ENCODE measurements at regions of chr9 and their contacts with region 1.

Region 1: DNA sequence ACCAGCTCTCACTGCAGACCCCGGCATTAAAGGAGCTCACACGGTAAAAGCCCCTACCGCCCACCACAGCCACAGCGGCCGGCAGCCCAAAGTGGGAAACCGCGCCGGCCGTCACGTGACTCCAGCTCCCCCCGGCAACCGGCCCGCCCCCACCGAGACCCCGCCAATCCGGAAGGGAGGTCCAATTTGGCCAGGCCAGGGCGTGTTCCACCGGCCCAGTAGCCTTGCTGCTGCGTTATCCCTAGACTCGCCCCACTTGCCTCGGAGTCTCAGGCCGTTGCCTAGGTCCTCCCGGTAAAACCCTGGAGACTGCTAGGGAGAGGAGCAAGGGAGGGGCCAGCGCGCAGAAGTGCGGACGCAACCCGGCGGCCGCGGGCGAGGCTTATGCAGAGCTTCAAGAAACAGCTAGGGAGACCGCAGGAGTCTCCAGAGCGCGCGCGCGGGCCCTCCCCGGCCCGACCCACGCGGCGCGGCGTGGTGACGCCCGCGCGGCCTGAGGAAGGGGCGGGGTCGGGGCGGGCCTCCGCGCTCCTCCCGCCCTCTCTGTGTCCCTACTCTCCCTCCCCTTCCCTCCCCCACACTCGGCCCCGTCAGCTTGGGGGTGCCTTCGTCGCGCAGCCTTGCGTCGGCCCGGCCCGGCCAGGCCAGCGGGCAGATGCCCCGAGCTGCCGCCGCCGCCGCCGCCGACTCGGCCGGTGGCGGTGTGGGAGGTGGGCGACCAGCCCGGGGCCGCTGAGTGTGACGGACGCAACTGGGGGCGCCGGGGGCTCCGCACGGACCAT is at the start of gene RIC1:
- DNase-seq: peak; percentile 84 to 93 (median 88)
- ATAC-seq: peak; percentile 82 to 86
- H3K4me3 Mint-ChIP-seq: peak within 1 kb of the TSS; percentile 96 to 100 (median 99)
- H3K27ac Mint-ChIP-seq: peak within 1 kb of the TSS; percentile 96 to 100 (median 98)
- H3K4me1 Mint-ChIP-seq: peaks cover 34 to 80% (median 67%) of the 10 kb centered on the region in 4 donors
- H3K27me3 Mint-ChIP-seq: no peaks in the 10 kb centered on the region
- polyA plus RNA-seq, gene RIC1: 5.4 to 8.3 (median 6.2) TPM

Region 2: DNA sequence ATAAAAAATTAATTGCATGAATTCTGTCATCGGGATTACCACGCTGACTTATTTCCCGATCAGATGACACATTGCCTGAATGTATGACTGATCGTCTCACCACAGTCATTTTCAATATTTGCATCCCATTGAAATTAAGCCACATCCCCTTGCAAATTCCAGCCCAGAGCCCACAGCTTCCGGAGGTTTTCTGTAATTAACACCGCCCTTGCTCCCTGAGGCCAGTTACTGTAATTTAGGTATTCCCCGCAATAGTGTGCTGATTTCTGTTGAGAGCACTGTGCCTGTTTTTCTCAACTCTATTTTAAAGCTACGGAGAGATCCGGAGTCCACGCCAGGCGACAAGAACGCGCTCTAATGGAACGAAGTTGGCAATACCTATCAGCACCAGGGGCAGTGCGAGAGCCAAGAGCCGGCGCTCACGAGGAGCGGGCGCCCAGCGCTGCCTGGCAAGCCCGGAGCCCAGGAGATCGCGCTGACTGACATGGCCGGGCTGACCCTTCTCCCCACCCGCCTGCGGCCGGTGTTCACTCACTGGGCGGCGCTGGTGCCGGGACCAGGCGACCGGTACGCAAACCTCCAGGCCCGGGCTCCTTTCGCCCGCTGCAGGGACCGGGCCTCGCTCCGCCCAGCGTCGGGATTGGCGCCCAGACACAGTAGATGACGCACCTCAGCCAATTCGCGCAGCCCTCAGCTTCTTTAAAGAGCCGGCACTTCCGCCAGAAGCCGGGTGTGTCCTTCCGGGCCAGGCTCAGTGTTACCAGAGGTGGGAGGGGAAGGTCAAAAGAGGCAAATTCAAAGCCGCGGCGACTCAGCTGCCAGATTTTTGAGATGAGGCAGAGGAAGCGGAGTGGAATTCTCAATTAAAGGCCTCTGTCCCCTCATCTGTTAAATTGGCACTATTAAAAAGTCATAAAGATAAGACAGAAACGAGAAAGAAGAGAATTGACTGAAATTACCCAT is 191.2 kb before region 1 on chr9 and contains the start of gene PLGRKT:
- POLR2A ChIA-PET with region 1: interaction called, 16 read pairs
- DNase-seq: peak; percentile 74 to 94 (median 88)
- ATAC-seq: peak; percentile 95 to 96
- H3K4me3 Mint-ChIP-seq: peak within 1 kb of the TSS; percentile 83 to 98 (median 95)
- H3K27ac Mint-ChIP-seq: peak within 1 kb of the TSS; percentile 94 to 100 (median 98)
- H3K4me1 Mint-ChIP-seq: peaks cover 17 to 39% (median 35%) of the 10 kb centered on the region in 4 donors
- H3K27me3 Mint-ChIP-seq: no peaks in the 10 kb centered on the region
- polyA plus RNA-seq, gene PLGRKT: 45.2 to 60.3 (median 55.8) TPM

Region 3: GRCh38 chr9:5582835-5583195 is 45.9 kb before region 1 on chr9:
- POLR2A ChIA-PET with region 1: interaction called, 11 read pairs
- DNase-seq: peak in 9 of 10 donors; percentile 2 to 71 (median 41)
- ATAC-seq: peak; percentile 77 to 90
- H3K4me3 Mint-ChIP-seq: peak overlapping the region in 4 of 10 donors; percentile 13 to 46 (median 38)
- H3K27ac Mint-ChIP-seq: peak overlapping the region in 9 of 10 donors; percentile 40 to 89 (median 85)
- H3K4me1 Mint-ChIP-seq: peaks cover 23 to 49% (median 38%) of the 10 kb centered on the region in 4 donors
- H3K27me3 Mint-ChIP-seq: no peaks in the 10 kb centered on the region

Region 4: GRCh38 chr9:5608298-5609225 is 20.2 kb before region 1 on chr9:
- POLR2A ChIA-PET with region 1: interaction called, 10 read pairs
- DNase-seq: peak in 2 of 10 donors; percentile 18 to 20
- ATAC-seq: peak; percentile 67 to 76
- H3K4me3 Mint-ChIP-seq: peak overlapping the region; percentile 66 to 90 (median 84)
- H3K27ac Mint-ChIP-seq: peak overlapping the region; percentile 22 to 95 (median 80)
- H3K4me1 Mint-ChIP-seq: peaks cover 4 to 39% (median 30%) of the 10 kb centered on the region in 4 donors
- H3K27me3 Mint-ChIP-seq: no peaks in the 10 kb centered on the region

Region 5: GRCh38 chr9:5688109-5688508 is 59.4 kb after region 1 on chr9:
- POLR2A ChIA-PET with region 1: no interaction called
- DNase-seq: no peak
- ATAC-seq: no peak
- H3K4me3 Mint-ChIP-seq: peak overlapping the region in 1 of 10 donors; percentile 0
- H3K27ac Mint-ChIP-seq: no peak overlapping the region
- H3K4me1 Mint-ChIP-seq: peaks cover 11 to 26% (median 20%) of the 10 kb centered on the region in 4 donors
- H3K27me3 Mint-ChIP-seq: no peaks in the 10 kb centered on the region

Region 6: DNA sequence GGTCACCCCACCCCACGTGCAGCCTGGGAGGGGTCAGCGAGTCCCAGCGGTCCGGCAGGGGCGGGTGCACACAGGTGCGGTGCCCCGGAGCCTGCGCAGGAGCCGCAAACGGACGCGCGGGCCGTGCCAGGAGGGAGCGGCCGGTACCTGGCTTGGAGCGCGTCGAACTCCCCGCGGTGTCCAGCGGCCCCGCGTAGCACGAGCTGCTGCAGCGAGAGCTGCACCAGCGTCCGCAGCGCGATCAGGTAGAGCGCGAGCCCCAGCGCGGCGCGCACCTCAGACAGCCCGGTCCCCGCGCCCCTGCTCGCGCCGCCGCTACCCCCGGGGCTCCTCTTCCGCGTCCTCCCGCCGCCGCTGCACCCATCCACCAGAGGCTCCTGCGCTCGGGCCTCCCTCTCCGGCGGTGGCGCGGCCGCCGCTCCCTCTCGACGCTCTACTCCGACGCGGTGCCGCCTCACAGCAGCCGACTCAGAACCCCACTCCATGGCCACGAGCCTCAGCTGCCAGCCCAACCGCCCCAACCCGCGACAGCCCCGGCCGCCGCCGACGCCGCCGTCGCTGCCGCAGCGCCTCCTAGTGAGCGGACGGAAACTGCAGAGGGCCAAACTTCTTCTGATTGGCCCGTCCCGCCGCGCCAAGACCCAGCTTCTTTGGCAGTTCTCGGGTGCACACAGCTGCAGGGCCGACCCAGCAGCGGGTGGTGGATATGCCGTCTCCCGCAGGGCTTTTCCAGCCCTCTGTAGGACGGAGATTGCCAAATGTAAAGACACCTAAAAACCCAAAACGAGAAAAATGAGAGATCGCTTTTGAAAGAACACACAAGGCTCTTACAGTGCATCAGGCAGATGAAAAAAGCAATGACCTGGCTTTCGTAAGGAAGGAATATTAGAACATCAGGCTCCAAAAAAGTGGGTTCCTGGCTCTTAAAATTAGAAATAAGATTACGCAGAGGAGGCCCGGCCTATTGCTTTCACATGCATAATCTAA is 204.1 kb after region 1 on chr9 and contains the start of gene ERMP1:
- POLR2A ChIA-PET with region 1: interaction called, 11 read pairs
- DNase-seq: peak; percentile 78 to 92 (median 90)
- ATAC-seq: peak; percentile 88 to 90
- H3K4me3 Mint-ChIP-seq: peak within 1 kb of the TSS; percentile 89 to 99 (median 96)
- H3K27ac Mint-ChIP-seq: peak within 1 kb of the TSS; percentile 52 to 97 (median 93)
- H3K4me1 Mint-ChIP-seq: peaks cover 28 to 64% (median 61%) of the 10 kb centered on the region in 4 donors
- H3K27me3 Mint-ChIP-seq: no peaks in the 10 kb centered on the region
- polyA plus RNA-seq, gene ERMP1: 7.0 to 11.8 (median 10.8) TPM

Measured in naive thymus-derived CD8-positive, alpha-beta T cell (primary cell).